ENCODE measurements at regions of chr14 and their contacts with region 1.

Region 1: GRCh38 chr14:103880348-103881267 is 33.2 kb upstream of the PPP1R13B start:
- DNase-seq: peak; percentile 43
- H3K4me3 ChIP-seq: no peak overlapping the region
- H3K27ac ChIP-seq: no peak overlapping the region
- H3K4me1 ChIP-seq: peaks cover 26% of the 10 kb centered on the region
- H3K27me3 ChIP-seq: no peaks in the 10 kb centered on the region
- CTCF ChIP-seq: no peak
- POLR2A ChIP-seq: no peak

Region 2: GRCh38 chr14:103847451-103848188 is 33.0 kb before region 1 on chr14 and contains the start of gene PPP1R13B:
- CTCF ChIA-PET with region 1: no interaction called
- POLR2A ChIA-PET with region 1: interaction called, 6 read pairs
- dilution Hi-C with region 1: no loop called
- intact Hi-C with region 1: loop called (anchors 2 kb)
- DNase-seq: peak; percentile 82
- H3K4me3 ChIP-seq: peak within 1 kb of the TSS; percentile 45 to 83 (median 77)
- H3K27ac ChIP-seq: no peak within 1 kb of the TSS
- H3K4me1 ChIP-seq: peaks cover 15% of the 10 kb centered on the region
- H3K27me3 ChIP-seq: no peaks in the 10 kb centered on the region
- CTCF ChIP-seq: no peak
- POLR2A ChIP-seq: peak; percentile 45
- total RNA-seq, gene PPP1R13B: 29.3 and 30.0 TPM in 2 replicates

Region 3: GRCh38 chr14:103855063-103855733 is 25.4 kb before region 1 on chr14:
- CTCF ChIA-PET with region 1: no interaction called
- POLR2A ChIA-PET with region 1: interaction called, 6 read pairs
- dilution Hi-C with region 1: no loop called
- intact Hi-C with region 1: loop called (anchors 2 kb)
- DNase-seq: peak; percentile 55
- H3K4me3 ChIP-seq: no peak overlapping the region
- H3K27ac ChIP-seq: no peak overlapping the region
- H3K4me1 ChIP-seq: peaks cover 21% of the 10 kb centered on the region
- H3K27me3 ChIP-seq: no peaks in the 10 kb centered on the region
- CTCF ChIP-seq: no peak
- POLR2A ChIP-seq: no peak

Region 4: DNA sequence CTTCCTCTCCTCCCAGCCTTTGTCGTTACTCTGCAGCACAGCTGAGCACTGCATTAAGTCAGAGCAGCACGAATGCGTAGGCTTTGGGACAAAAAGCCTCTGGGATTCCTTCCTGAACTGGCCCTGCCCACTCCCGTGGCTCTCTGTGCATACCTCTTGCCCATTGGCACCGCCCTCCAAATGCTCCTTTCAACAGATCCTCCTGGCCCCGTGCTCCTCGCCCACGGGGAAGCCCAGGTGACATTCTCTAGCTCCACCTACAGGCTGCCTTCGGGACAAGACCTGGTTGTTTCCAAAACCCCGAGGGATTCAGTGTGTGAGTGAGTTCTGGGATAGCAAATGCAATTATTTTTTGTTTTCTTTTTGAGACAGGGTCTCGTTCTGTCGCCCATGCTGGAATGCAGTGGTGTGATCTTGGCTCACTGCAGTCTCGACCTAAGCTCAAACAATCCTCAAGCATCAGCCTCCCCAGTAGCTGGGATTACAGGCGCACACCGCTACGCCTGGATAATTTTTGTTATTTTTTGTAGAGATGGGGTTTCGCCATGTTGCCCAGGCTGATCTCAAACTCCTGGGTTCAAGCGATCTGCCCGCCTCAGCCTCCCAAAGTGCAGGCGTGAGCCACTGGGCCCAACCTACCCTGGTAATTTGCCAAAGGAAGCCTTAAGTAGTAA is 29.8 kb after region 1 on chr14:
- CTCF ChIA-PET with region 1: interaction called, 12 read pairs
- POLR2A ChIA-PET with region 1: no interaction called
- dilution Hi-C with region 1: no loop called
- intact Hi-C with region 1: no loop called
- DNase-seq: peak; percentile 75
- H3K4me3 ChIP-seq: no peak overlapping the region
- H3K27ac ChIP-seq: no peak overlapping the region
- H3K4me1 ChIP-seq: peaks cover 4% of the 10 kb centered on the region
- H3K27me3 ChIP-seq: no peaks in the 10 kb centered on the region
- CTCF ChIP-seq: peak; percentile 85
- POLR2A ChIP-seq: no peak